GM10248 (cell line): ENCODE measurements at regions of chr11 and their contacts with region 1.

Region 1: GRCh38 chr11:130131961-130132850 is 27.4 kb upstream of the ST14 start:
- DNase-seq: peak; percentile 77
- CTCF ChIP-seq: peak; percentile 90

Region 2: GRCh38 chr11:129911298-129911697 is 220.9 kb before region 1 on chr11:
- CTCF ChIA-PET with region 1: interaction called, 12 read pairs
- POLR2A ChIA-PET with region 1: no interaction called
- DNase-seq: no peak
- CTCF ChIP-seq: no peak

Region 3: GRCh38 chr11:129973068-129973467 is 159.1 kb before region 1 on chr11:
- CTCF ChIA-PET with region 1: interaction called, 10 read pairs
- POLR2A ChIA-PET with region 1: no interaction called
- DNase-seq: peak; percentile 38
- CTCF ChIP-seq: no peak

Region 4: DNA sequence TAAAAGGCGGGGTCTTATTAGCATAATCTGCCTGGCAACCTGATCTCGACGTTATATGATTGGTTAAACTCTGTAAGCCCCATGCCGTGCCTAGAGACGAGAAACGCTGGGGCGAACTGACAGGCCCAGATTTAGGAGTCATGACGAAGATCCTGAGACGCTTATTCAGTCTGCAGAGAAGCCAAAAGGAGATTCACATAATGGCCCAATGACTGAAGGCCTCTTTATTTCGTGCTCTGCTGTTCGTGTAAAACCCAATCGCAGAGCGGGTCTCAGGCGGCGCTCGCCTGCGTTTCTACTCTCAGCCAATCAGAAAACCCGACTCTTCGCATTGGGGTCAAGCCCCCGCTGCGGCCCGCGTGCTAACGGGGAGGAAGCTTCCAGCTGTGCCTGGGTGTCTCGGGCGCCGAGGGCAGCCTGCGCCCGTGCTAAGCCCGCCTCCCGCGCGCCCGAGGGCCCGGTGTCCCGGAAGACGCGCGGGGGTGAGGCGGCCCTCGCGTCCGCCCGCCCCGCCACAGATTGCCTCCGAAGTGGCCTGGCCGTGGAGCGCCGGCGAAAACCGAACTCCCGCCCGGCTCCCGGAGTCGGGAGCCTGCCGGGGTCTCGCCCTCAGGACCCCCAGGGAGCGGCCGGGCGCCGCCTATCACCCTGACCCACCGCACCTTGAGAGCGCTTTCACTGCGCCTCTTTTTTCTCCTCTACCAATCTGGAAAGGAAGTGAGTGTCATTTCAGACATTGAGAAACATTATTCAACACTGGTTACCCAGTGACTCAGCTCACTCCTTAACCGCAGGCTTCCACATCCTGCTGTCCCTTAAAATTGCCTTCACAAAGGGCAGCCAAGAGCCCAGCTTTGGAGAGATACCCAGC is 129.1 kb before region 1 on chr11:
- CTCF ChIA-PET with region 1: interaction called, 12 read pairs
- POLR2A ChIA-PET with region 1: no interaction called
- DNase-seq: peak; percentile 96
- CTCF ChIP-seq: no peak

Region 5: GRCh38 chr11:130029137-130029536 is 103.1 kb before region 1 on chr11:
- CTCF ChIA-PET with region 1: no interaction called
- POLR2A ChIA-PET with region 1: no interaction called
- DNase-seq: no peak
- CTCF ChIP-seq: no peak

Region 6: GRCh38 chr11:130145975-130146776 is 14.0 kb after region 1 on chr11:
- CTCF ChIA-PET with region 1: interaction called, 25 read pairs
- POLR2A ChIA-PET with region 1: no interaction called
- DNase-seq: no peak
- CTCF ChIP-seq: peak; percentile 14

Region 7: DNA sequence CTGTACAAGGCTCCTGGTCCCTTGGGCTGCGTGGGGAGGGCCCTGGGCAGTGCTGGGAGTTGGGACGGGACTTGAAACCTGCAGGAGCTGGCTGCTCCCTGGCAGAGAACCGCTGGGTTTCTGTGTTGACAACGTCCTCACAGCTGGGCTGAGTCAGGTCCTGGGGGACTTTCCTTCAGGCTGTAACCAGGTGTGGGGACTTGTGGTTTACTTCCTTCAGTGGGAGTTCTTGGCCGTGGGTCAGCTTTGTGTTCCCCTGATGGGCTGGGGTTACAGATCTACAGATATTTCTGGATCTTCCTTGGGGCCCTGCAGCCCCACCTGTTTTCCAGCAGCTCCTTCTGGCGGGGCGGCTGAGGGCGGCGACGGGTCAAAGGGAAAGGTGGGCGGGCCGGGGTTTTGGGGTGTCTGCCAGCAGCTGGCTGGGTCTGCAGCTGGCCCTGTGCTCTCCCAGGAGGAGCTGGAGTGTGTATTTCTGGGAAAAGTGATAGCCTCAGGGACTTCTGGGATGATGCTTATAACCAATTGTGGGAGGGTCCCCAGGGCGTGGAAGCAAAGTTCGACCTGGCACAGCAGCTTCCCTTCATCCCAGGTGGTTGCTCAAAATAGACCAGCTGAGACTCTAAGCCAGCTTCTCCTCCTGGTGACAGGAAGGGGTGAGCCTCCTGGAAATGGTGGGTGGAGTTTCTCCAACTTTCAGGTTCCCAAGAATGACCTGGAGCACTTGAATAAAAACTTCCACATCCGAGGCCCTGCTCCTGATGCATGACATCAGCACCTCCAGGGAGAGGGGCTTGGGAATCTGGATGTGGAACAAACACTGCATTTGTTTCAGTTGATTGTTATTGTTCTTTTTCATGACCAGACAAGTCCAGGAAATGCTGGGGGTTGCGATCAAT is 46.5 kb after region 1 on chr11:
- CTCF ChIA-PET with region 1: no interaction called
- POLR2A ChIA-PET with region 1: no interaction called
- DNase-seq: peak; percentile 51
- CTCF ChIP-seq: no peak

Region 8: GRCh38 chr11:130192845-130193267 is 60.6 kb after region 1 on chr11:
- CTCF ChIA-PET with region 1: no interaction called
- POLR2A ChIA-PET with region 1: no interaction called
- DNase-seq: no peak
- CTCF ChIP-seq: no peak